K562 (cell line): ENCODE measurements at regions of chr5 and their contacts with region 1.

Region 1: GRCh38 chr5:170338933-170339779 is 41.6 kb upstream of the LCP2 start:
- DNase-seq: peak; percentile 46 to 77 (median 60)
- ATAC-seq: peak; percentile 89
- H3K4me3 ChIP-seq: no peak overlapping the region
- H3K27ac ChIP-seq: no peak overlapping the region
- H3K4me1 ChIP-seq: peaks cover 0 to 9% of the 10 kb centered on the region in 2 experiments; a peak in 3 of 5 replicates
- H3K27me3 ChIP-seq: no peaks in the 10 kb centered on the region; a peak in 3 of 5 replicates
- CTCF ChIP-seq: peak; percentile 95 to 100 (median 99)
- EP300 ChIP-seq: no peak
- POLR2A ChIP-seq: no peak
- RAD21 ChIP-seq: peak; percentile 98 to 100

Region 2: DNA sequence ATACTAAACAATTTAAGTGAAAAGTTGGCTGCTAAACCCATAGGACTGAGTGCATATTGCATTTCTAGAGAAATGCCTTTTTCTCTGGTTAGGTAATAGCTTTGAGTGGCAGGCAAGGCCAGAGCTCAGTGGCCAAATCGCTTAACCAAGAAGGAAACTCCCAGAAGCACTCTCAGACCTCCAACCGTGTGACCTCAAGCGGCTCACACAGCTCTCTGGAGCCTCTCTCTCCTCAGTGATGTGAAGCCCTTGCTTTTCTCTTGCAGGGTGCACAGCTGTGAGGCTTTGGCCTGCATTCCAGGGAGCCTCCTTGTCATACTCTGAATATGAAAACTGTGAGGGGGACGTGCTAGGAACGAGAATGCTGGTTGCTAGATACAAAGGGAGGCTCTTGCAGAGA is 465.5 kb before region 1 on chr5:
- CTCF ChIA-PET with region 1: no interaction called
- POLR2A ChIA-PET with region 1: no interaction called
- in situ Hi-C with region 1: no loop called
- intact Hi-C with region 1: no loop called
- DNase-seq: no peak
- ATAC-seq: no peak
- H3K4me3 ChIP-seq: no peak overlapping the region
- H3K27ac ChIP-seq: no peak overlapping the region
- H3K4me1 ChIP-seq: no peaks in the 10 kb centered on the region; a peak in 1 of 5 replicates
- H3K27me3 ChIP-seq: no peaks in the 10 kb centered on the region
- CTCF ChIP-seq: no peak
- EP300 ChIP-seq: no peak
- POLR2A ChIP-seq: no peak
- RAD21 ChIP-seq: no peak

Region 3: GRCh38 chr5:170034231-170034630 is 304.9 kb before region 1 on chr5:
- CTCF ChIA-PET with region 1: no interaction called
- POLR2A ChIA-PET with region 1: no interaction called
- in situ Hi-C with region 1: no loop called
- intact Hi-C with region 1: no loop called
- DNase-seq: no peak
- ATAC-seq: no peak
- H3K4me3 ChIP-seq: no peak overlapping the region
- H3K27ac ChIP-seq: no peak overlapping the region
- H3K4me1 ChIP-seq: no peaks in the 10 kb centered on the region
- H3K27me3 ChIP-seq: peaks cover 0 to 7% of the 10 kb centered on the region in 2 experiments; a peak in 2 of 5 replicates
- CTCF ChIP-seq: no peak
- EP300 ChIP-seq: no peak
- POLR2A ChIP-seq: no peak
- RAD21 ChIP-seq: no peak

Region 4: GRCh38 chr5:170267431-170268152 is 71.6 kb before region 1 on chr5:
- CTCF ChIA-PET with region 1: interaction called, 13 read pairs
- POLR2A ChIA-PET with region 1: interaction called, 5 read pairs
- in situ Hi-C with region 1: loop called (anchors 5 kb)
- intact Hi-C with region 1: loop called (anchors 1 kb)
- DNase-seq: peak; percentile 76 to 85 (median 81)
- ATAC-seq: peak; percentile 92
- H3K4me3 ChIP-seq: no peak overlapping the region
- H3K27ac ChIP-seq: no peak overlapping the region
- H3K4me1 ChIP-seq: peaks cover 7 to 22% of the 10 kb centered on the region in 2 experiments; a peak in 4 of 5 replicates
- H3K27me3 ChIP-seq: peaks cover 0 to 4% of the 10 kb centered on the region in 2 experiments; a peak in 2 of 5 replicates
- CTCF ChIP-seq: peak; percentile 84 to 86 (median 85)
- EP300 ChIP-seq: no peak
- POLR2A ChIP-seq: no peak
- RAD21 ChIP-seq: peak; percentile 78 to 82

Region 5: GRCh38 chr5:170315154-170315553 is 24.0 kb before region 1 on chr5:
- CTCF ChIA-PET with region 1: no interaction called
- POLR2A ChIA-PET with region 1: no interaction called
- in situ Hi-C with region 1: no loop called
- intact Hi-C with region 1: no loop called
- DNase-seq: peak in 1 of 4 experiments; percentile 32
- ATAC-seq: no peak
- H3K4me3 ChIP-seq: no peak overlapping the region
- H3K27ac ChIP-seq: no peak overlapping the region
- H3K4me1 ChIP-seq: peaks cover 0 to 32% of the 10 kb centered on the region in 2 experiments; a peak in 4 of 5 replicates
- H3K27me3 ChIP-seq: no peaks in the 10 kb centered on the region
- CTCF ChIP-seq: no peak
- EP300 ChIP-seq: no peak
- POLR2A ChIP-seq: no peak
- RAD21 ChIP-seq: no peak